ENCODE measurements at regions of chr3 and their contacts with region 1.

Region 1: DNA sequence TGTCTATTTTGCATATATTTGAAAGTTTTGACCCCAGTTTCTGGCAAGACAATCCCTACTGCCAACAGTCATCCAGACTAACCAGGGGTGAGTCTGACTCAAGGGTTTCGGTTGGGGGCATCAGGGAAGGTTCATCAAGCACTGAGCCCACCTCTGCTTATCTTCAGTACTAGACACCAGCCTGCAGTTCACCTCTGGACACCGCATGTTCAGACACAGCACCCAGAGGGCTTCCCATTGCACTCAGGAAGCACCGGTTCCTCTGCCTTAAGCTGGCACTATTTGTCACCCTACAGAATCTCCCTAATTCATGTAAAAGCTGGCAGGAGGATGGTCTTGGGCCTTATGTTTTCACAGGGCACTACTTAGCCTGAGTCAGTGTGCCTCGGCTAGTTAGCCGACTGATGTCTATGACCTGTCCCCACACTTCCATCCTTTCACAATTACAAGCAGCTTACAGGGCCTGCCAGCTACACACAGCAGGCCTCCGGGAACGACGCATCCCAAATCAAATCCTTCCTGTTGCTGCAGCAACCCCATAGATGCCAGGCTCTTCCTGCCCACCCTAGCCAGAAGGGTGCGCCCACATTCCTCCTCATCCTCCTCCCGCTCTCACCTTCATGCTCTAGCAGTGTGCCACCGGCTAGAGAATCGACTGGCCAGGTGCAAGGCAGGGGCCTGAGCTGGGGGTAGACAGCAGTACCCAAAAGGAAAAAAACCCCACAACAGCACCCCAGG is 52.5 kb downstream of the SH3BP5 start:
- DNase-seq: no peak
- H3K4me3 ChIP-seq: no peak overlapping the region
- H3K27ac ChIP-seq: no peak overlapping the region
- H3K4me1 ChIP-seq: peaks cover 31% of the 10 kb centered on the region
- CTCF ChIP-seq: no peak

Region 2: GRCh38 chr3:15291589-15292541 is 12.0 kb after region 1 on chr3:
- CTCF ChIA-PET with region 1: interaction called, 4 read pairs
- POLR2A ChIA-PET with region 1: interaction called, 10 read pairs
- intact Hi-C with region 1: no loop called
- DNase-seq: peak; percentile 77
- H3K4me3 ChIP-seq: peak overlapping the region; percentile 10
- H3K27ac ChIP-seq: peak overlapping the region; percentile 71
- H3K4me1 ChIP-seq: peaks cover 45% of the 10 kb centered on the region
- CTCF ChIP-seq: no peak

Measured in OCI-LY7 (cell line).